ENCODE measurements at regions of chr16 and their contacts with region 1.

Region 1: GRCh38 chr16:57757326-57757786 is 21.8 kb downstream of the KATNB1 start:
- DNase-seq: peak; percentile 97
- H3K4me3 ChIP-seq: peak overlapping the region in 1 of 2 experiments; percentile 17; a peak in 1 of 4 replicates
- H3K27ac ChIP-seq: no peak overlapping the region
- H3K4me1 ChIP-seq: no peaks in the 10 kb centered on the region
- H3K27me3 ChIP-seq: no peaks in the 10 kb centered on the region
- CTCF ChIP-seq: peak; percentile 92
- EP300 ChIP-seq: no peak
- RAD21 ChIP-seq: peak; percentile 84

Region 2: DNA sequence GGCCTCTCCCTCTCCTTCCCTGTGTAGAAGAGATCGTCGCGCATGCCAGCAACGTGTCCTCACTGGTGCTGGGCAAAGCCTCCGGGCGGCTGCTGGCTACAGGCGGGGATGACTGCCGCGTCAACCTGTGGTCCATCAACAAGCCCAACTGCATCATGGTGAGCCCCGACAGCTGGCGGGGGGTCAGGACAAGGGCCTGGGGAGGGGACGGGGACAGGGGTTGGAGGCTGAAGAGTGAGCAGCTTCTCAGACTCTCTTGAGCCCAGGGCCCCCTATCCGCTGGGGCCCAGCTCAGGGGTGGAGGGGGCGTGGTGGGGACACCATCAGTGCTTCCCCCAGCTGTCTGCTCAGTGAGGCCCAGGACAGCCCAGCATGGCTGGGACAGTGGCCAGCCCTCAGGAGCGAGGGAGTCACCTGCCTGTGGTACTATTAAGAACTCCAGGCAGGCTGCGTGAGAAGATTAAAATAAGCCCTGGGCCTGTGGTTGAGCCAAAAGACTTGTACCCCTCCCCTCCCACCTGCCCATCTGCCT is 15.6 kb before region 1 on chr16:
- CTCF ChIA-PET with region 1: interaction called, 19 read pairs
- POLR2A ChIA-PET with region 1: no interaction called
- DNase-seq: no peak
- H3K4me3 ChIP-seq: no peak overlapping the region
- H3K27ac ChIP-seq: no peak overlapping the region
- H3K4me1 ChIP-seq: peaks cover 5 to 8% of the 10 kb centered on the region in 2 experiments; a peak in 2 of 4 replicates
- H3K27me3 ChIP-seq: no peaks in the 10 kb centered on the region
- CTCF ChIP-seq: no peak
- EP300 ChIP-seq: no peak
- RAD21 ChIP-seq: no peak

Region 3: DNA sequence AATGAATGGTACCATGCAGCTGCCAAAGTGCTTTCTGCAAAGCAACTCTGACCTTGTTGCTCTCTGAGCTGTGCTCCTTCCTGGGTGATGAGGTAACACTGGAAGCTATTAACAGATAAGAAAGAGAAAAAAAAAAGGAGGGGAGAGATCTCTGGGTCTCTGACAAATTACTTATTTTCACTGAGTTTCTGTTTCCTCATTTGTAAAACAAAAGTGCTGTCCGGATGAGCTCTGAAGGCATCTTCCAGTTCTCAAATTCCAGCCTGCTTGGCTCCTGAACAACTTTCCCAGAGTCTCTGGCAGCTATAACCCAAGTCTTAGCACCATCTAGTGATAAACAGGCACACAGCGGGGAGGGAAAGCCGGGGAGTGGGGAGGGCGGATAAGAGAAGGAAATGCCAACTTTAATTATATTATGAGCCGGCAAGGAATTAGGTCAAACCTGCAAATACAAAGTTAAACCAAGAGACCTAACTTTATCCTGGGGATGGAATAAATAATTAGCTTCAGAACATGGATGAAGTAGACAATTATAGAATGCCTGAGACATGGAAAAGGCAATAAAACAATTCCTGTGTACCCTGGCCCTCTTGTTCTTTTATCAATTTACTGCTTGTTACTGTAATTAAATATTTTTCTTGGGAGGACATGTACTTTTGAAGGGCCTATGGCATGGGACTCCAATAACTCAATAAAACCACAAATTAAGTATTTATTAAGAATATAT is 106.2 kb after region 1 on chr16:
- CTCF ChIA-PET with region 1: interaction called, 57 read pairs
- POLR2A ChIA-PET with region 1: no interaction called
- DNase-seq: peak; percentile 56
- H3K4me3 ChIP-seq: no peak overlapping the region
- H3K27ac ChIP-seq: no peak overlapping the region
- H3K4me1 ChIP-seq: peaks cover 3 to 17% of the 10 kb centered on the region in 2 experiments
- H3K27me3 ChIP-seq: no peaks in the 10 kb centered on the region
- CTCF ChIP-seq: peak; percentile 75
- EP300 ChIP-seq: no peak
- RAD21 ChIP-seq: peak; percentile 80

Region 4: GRCh38 chr16:57882792-57883191 is 125.4 kb after region 1 on chr16:
- CTCF ChIA-PET with region 1: interaction called, 12 read pairs
- POLR2A ChIA-PET with region 1: no interaction called
- DNase-seq: peak; percentile 90
- H3K4me3 ChIP-seq: no peak overlapping the region
- H3K27ac ChIP-seq: no peak overlapping the region
- H3K4me1 ChIP-seq: peaks cover 0 to 12% of the 10 kb centered on the region in 2 experiments; a peak in 2 of 4 replicates
- H3K27me3 ChIP-seq: peaks cover 5% of the 10 kb centered on the region; the same call in 1 of the 2 replicates
- CTCF ChIP-seq: no peak
- EP300 ChIP-seq: peak in 1 of 2 experiments; percentile 64; a peak in 2 of 4 replicates
- RAD21 ChIP-seq: peak; percentile 23; the same call in 1 of the 2 replicates

Measured in SK-N-SH (cell line).